PC-3 (cell line): ENCODE measurements at regions of chr10 and their contacts with region 1.

Region 1: DNA sequence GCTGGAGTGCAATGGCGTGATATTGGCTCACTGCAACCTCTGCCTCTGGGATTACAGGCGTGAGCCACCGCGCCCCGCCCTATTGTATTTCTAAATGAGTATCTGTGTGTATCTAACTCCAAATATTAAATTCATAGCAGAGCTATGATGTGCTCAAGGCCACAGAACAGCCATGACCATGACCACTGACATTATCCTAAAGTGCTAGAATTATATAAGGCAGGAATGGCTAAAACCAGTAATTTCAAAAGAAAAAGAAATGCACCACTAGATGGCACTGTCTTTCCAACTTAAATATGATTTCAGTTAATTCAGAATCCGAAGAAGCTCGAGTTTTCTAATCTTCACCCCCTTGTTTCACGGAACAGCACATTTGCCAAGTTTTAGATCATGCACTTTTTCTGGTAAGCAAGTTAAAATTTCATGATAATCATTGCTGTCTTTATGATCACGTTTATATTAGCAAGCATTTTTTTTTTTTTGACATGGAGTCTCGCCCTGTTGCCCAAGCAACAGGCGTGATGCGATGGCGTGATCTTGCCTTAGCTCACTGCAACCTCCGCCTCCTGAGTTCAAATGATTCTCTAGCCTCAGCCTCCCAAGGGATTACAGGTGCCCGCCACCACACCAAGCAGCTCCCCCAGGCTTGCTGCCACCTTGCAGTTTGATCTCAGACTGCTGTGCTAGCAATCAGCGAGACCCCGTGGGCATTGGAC is 65.3 kb downstream of the OR13A1 start:
- DNase-seq: peak; percentile 97
- ATAC-seq: peak; percentile 88
- H3K4me3 ChIP-seq: peak overlapping the region; percentile 64
- H3K27ac ChIP-seq: no peak overlapping the region
- H3K4me1 ChIP-seq: no peaks in the 10 kb centered on the region; the same call in 1 of the 2 replicates
- H3K27me3 ChIP-seq: no peaks in the 10 kb centered on the region
- CTCF ChIP-seq: peak; percentile 82

Region 2: DNA sequence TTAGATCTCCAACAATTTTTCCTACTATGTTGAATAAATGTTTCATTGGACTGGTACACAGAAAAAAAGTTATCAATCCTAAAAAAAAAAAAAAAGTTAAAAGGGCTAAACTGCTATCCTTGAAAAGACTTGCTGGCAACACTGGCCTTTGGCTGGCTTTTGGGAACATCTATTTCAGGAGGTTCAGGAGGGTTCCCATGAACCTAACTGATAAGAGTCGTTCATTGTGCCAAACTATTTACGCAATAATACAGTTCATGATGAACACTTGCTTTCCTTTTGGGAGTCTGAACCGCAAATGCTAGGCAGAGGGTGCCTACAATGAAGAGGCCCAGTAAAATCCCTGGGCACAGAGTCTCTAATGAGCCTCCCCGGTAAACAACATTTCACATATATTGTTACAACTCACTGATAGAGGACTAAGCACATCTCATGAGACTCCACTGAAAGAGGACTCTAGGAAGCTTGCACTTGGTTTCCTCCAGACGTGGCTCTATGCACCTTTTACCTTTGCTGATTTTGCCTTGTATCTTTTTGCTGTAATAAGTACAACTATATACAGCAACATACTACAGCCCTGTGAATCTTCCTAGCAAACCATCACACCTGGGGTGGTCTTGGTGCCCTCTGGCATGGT is 377.4 kb after region 1 on chr10:
- CTCF ChIA-PET with region 1: no interaction called
- POLR2A ChIA-PET with region 1: no interaction called
- intact Hi-C with region 1: no loop called
- DNase-seq: no peak
- ATAC-seq: no peak
- H3K4me3 ChIP-seq: no peak overlapping the region
- H3K27ac ChIP-seq: no peak overlapping the region
- H3K4me1 ChIP-seq: no peaks in the 10 kb centered on the region
- H3K27me3 ChIP-seq: no peaks in the 10 kb centered on the region
- CTCF ChIP-seq: no peak

Region 3: DNA sequence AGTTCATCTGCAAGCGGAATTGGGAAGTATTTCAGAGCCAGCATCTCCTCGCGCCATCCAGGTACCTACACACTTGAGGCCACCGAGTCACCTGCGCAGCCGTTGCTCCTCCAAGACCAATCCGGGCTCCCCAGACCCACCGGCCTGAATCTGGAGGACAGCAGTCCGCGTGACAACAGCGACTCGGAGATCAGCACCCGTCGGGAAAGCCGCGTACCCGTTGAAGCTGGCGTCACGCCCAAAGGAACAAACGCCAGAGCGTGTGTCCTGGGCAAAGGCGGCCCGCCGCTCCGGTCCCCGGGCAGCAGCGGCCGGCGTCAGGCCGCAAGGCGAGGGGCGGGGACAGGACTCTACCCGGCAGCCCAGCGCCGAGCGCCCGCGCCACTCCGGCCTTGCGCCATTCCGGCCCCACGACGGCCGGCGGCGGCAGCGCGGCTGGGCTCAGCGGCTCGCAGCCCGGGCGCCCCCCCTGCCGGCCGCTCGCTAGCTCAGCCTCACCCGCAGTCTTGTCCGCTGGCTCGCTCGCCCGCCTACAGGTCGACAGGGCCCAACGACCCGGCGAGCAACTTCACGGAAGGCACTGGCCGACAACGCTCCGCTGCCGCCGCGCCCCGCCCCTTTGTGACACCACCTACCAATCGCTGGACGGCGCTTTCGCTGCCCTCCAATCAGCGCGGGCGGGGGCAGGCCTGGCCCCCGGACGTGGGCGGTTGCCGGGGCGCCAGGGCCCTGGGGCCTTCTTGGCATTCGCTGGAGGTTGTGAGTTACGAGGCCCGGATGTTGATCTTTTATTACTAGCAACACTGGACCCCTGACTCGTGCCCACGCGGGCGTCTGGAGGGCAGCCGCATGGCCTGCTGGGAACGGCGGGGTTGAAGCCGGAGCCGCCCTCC is 422.3 kb after region 1 on chr10 and contains the start of gene ZFAND4:
- CTCF ChIA-PET with region 1: interaction called, 3 read pairs
- POLR2A ChIA-PET with region 1: no interaction called
- intact Hi-C with region 1: loop called (anchors 10 kb)
- DNase-seq: peak; percentile 90
- ATAC-seq: peak; percentile 95
- H3K4me3 ChIP-seq: peak within 1 kb of the TSS; percentile 77
- H3K27ac ChIP-seq: peak within 1 kb of the TSS; percentile 60
- H3K4me1 ChIP-seq: peaks cover 4% of the 10 kb centered on the region
- H3K27me3 ChIP-seq: no peaks in the 10 kb centered on the region
- CTCF ChIP-seq: peak; percentile 48; the same call in 1 of the 2 replicates
- total RNA-seq, gene ZFAND4: 7.9 and 8.7 TPM in 2 replicates

Region 4: DNA sequence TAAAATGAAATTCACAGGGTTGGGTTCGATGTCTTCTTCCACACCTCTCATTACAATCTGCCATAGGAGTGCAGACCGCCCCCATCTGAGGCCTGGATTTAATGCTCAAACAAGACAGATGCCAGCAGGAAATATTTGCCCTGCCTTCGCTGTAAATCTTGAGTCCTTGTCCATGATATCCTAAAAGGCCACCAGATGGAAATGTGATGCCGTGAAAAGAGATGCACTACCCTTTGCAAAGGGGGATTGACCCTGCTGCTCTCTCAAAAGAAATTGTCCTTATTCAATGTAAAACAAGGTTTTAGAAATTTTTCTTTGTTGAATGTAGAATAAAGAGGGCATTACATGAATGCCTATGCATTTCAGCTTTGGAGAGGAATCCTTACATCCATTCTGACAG is 559.7 kb after region 1 on chr10:
- CTCF ChIA-PET with region 1: no interaction called
- POLR2A ChIA-PET with region 1: no interaction called
- intact Hi-C with region 1: loop called (anchors 1 kb)
- DNase-seq: peak; percentile 31
- ATAC-seq: peak; percentile 70
- H3K4me3 ChIP-seq: no peak overlapping the region
- H3K27ac ChIP-seq: no peak overlapping the region
- H3K4me1 ChIP-seq: no peaks in the 10 kb centered on the region
- H3K27me3 ChIP-seq: no peaks in the 10 kb centered on the region
- CTCF ChIP-seq: peak; percentile 55